ENCODE measurements at regions of chr12 and their contacts with region 1.

Region 1: DNA sequence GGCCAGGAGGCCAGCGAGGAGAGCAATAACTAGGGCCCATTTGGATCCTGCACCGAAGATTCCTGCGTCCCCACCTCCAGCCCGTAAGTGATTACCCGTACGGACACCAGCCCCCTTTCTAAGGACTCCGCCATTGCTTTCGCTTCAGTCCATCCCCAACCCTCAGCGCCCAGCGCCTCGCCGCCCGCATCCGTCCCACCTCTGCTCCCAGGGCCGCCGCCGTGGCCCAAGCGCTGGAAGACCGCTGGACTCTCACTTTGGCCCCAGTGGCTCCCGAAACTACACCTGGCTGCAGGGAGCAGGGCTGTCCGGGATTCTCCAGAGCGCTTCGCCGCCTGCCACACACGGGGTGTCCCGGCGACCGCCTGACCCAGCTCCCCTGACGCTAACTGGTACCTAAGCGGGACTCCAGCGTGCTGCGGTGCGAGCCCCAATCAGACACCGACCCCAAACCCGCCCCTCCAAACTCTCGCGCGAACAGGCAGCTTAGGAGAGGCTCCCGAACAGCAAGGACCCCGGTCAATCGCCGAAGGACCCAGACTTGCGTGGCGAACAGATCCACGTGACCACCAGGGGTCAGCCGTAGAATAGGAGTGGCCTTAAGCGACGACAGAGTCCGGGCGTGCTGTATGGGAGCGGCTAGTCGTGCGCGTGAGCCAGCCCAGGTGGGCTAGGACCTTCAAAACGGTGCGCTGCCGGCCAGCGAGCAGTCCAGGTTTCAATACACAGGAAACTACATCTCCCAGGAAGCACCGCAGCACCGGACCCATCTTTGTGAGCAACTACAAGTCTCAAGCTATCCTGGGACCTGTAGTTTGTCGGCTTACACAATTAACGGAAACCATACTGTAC is at the start of gene CNPY2:
- DNase-seq: peak; percentile 85
- ATAC-seq: peak; percentile 89
- H3K4me3 Mint-ChIP-seq: peak within 1 kb of the TSS; percentile 98
- H3K27ac Mint-ChIP-seq: peak within 1 kb of the TSS; percentile 98
- H3K4me1 Mint-ChIP-seq: peaks cover 21% of the 10 kb centered on the region
- H3K27me3 Mint-ChIP-seq: no peaks in the 10 kb centered on the region
- CTCF ChIP-seq: no peak
- total RNA-seq, gene CNPY2: 72.1 and 98.8 TPM in 2 replicates

Region 2: DNA sequence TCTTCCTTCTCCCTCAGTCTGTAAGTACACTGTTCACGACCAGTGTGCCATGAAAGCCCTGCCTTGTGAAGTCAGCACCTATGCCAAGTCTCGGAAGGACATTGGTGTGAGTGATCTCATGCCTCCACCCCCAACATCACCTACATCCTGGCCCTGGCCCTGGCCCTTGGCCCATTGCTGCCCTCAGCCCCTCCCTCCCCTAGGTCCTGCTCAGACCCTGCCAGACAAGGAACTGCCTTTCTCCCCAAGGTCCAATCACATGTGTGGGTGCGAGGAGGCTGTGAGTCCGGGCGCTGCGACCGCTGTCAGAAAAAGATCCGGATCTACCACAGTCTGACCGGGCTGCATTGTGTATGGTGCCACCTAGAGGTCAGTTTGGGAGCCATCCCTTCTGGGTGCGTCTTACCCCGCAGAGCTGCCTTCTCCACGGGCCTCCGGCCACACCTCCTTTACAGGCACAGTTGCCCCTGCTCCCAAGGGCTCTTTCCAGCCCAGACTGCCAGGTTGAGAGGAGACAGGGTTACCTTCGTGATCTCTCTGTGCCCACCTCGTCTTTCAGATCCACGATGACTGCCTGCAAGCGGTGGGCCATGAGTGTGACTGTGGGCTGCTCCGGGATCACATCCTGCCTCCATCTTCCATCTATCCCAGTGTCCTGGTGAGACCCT is 375.6 kb before region 1 on chr12:
- CTCF ChIA-PET with region 1: no interaction called
- POLR2A ChIA-PET with region 1: no interaction called
- intact Hi-C with region 1: no loop called
- DNase-seq: peak; percentile 63
- ATAC-seq: peak; percentile 99
- H3K4me3 Mint-ChIP-seq: no peak overlapping the region
- H3K27ac Mint-ChIP-seq: peak overlapping the region; percentile 47
- H3K4me1 Mint-ChIP-seq: peaks cover 12% of the 10 kb centered on the region
- H3K27me3 Mint-ChIP-seq: no peaks in the 10 kb centered on the region
- CTCF ChIP-seq: peak; percentile 63

Region 3: DNA sequence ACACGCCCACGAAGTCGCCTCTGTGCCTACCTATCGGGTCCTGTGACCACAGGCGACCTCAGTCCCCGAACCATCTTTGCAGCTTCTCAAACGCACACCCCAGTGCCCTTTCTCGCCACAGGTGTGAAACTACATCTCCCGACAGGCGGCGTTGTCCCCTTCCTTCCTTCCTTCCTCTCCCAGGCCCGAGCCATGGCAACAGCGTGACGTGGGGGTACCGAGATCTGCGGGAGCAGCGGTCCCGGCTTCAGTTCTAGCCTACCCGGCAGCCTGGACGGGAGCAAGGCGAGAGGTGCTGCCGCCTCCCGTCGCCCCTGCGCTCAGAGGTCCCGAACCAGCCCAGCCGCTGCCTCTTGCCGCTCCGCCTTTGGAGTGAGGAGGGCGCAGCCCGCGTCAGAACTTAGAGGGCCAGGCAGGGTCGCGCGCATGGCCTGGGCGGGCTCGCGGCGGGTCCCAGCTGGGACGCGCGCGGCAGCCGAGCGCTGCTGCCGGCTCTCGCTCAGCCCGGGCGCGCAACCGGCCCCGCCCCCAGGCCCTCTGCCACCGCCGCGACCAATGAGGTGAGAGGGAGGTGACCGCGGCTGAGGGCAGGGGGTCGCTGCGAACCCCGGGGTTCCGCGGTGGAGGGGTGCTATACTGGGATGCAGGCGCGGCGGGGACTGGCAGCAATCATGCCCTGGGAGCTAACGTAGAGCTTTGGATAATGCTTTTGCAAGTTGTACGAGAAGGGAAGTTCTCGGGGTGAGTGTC is 49.0 kb before region 1 on chr12 and contains the start of gene COQ10A:
- CTCF ChIA-PET with region 1: interaction called, 3 read pairs
- POLR2A ChIA-PET with region 1: interaction called, 15 read pairs
- intact Hi-C with region 1: loop called (anchors 1 kb)
- DNase-seq: peak; percentile 90
- ATAC-seq: peak; percentile 90
- H3K4me3 Mint-ChIP-seq: peak within 1 kb of the TSS; percentile 93
- H3K27ac Mint-ChIP-seq: peak within 1 kb of the TSS; percentile 93
- H3K4me1 Mint-ChIP-seq: peaks cover 18% of the 10 kb centered on the region
- H3K27me3 Mint-ChIP-seq: no peaks in the 10 kb centered on the region
- CTCF ChIP-seq: no peak
- total RNA-seq, gene COQ10A: 30.2 and 35.6 TPM in 2 replicates

Region 4: GRCh38 chr12:56333679-56334489 is 18.0 kb after region 1 on chr12 and contains the start of gene PAN2:
- CTCF ChIA-PET with region 1: interaction called, 4 read pairs
- POLR2A ChIA-PET with region 1: interaction called, 61 read pairs
- intact Hi-C with region 1: loop called (anchors 1 kb)
- DNase-seq: peak; percentile 85
- ATAC-seq: peak; percentile 91
- H3K4me3 Mint-ChIP-seq: peak within 1 kb of the TSS; percentile 96
- H3K27ac Mint-ChIP-seq: peak within 1 kb of the TSS; percentile 100
- H3K4me1 Mint-ChIP-seq: peaks cover 46% of the 10 kb centered on the region
- H3K27me3 Mint-ChIP-seq: no peaks in the 10 kb centered on the region
- CTCF ChIP-seq: no peak
- total RNA-seq, gene PAN2: 86.3 and 98.9 TPM in 2 replicates

Region 5: GRCh38 chr12:56448860-56449621 is 133.2 kb after region 1 on chr12 and contains the start of gene TIMELESS:
- CTCF ChIA-PET with region 1: no interaction called
- POLR2A ChIA-PET with region 1: interaction called, 24 read pairs
- intact Hi-C with region 1: loop called (anchors 1 kb)
- DNase-seq: peak; percentile 85
- ATAC-seq: peak; percentile 96
- H3K4me3 Mint-ChIP-seq: peak within 1 kb of the TSS; percentile 94
- H3K27ac Mint-ChIP-seq: peak within 1 kb of the TSS; percentile 97
- H3K4me1 Mint-ChIP-seq: peaks cover 22% of the 10 kb centered on the region
- H3K27me3 Mint-ChIP-seq: no peaks in the 10 kb centered on the region
- CTCF ChIP-seq: no peak
- total RNA-seq, gene TIMELESS: 31.8 and 35.0 TPM in 2 replicates

Region 6: GRCh38 chr12:56521590-56522371 is 205.9 kb after region 1 on chr12 and contains the start of gene RBMS2:
- CTCF ChIA-PET with region 1: no interaction called
- POLR2A ChIA-PET with region 1: no interaction called
- intact Hi-C with region 1: no loop called
- DNase-seq: no peak
- ATAC-seq: peak; percentile 84
- H3K4me3 Mint-ChIP-seq: peak within 1 kb of the TSS; percentile 83
- H3K27ac Mint-ChIP-seq: peak within 1 kb of the TSS; percentile 72
- H3K4me1 Mint-ChIP-seq: peaks cover 22% of the 10 kb centered on the region
- H3K27me3 Mint-ChIP-seq: peaks cover 3% of the 10 kb centered on the region
- CTCF ChIP-seq: no peak
- total RNA-seq, gene RBMS2: 2.7 and 3.4 TPM in 2 replicates

Region 7: GRCh38 chr12:57238854-57239554 is 923.2 kb after region 1 on chr12:
- CTCF ChIA-PET with region 1: no interaction called
- POLR2A ChIA-PET with region 1: no interaction called
- intact Hi-C with region 1: loop called (anchors 1 kb)
- DNase-seq: peak; percentile 96
- ATAC-seq: peak; percentile 54
- H3K4me3 Mint-ChIP-seq: peak overlapping the region; percentile 89
- H3K27ac Mint-ChIP-seq: peak overlapping the region; percentile 90
- H3K4me1 Mint-ChIP-seq: peaks cover 94% of the 10 kb centered on the region
- H3K27me3 Mint-ChIP-seq: peaks cover 8% of the 10 kb centered on the region
- CTCF ChIP-seq: peak; percentile 99